Activated naive CD4-positive, alpha-beta T cell treated with anti-CD3 and anti-CD28 coated beads for 36 hours (primary cell): ENCODE measurements at regions of chr1 and their contacts with region 1.

Region 1: DNA sequence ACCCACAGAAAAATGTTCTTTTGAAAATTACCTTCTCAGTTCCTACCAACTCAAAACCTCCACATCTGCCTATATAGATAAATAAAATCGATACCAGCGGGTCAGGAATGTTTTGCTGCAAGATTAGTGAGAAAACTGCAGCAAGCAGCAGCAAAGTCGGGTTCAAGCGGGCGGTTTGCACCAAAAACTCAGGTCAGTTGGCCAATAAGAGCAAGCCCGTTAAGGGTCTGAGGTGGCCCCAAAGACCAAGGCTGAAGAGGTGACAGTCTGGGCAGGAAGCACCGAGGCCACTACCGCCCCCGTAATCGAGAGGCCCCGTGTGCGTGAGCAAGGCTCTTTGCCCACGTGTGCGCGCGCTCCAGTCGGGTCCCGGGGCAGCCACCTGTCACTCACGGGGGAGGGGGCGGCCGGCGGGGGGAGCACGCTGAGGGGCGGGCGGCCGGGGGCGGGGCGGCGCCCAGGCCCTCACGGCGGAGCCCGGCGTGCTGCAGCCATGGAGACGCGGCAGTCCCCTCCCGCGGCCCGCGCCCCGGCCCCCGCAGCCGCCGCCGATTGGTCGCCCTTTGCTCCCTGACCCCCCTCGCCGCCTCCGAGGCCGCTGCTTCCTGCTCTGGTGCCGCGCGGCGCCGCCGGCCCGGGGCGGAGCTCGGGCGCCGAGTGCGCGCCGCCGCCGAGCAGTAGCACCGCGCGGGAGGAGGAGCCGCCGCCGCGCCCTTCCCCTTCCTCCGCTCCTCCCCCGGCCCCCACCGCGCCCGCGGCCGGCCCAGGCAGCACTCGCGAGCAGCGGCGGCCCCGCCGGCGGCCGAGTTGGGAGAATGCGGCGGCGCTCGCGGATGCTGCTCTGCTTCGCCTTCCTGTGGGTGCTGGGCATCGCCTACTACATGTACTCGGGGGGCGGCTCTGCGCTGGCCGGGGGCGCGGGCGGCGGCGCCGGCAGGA is at the start of gene GALNT2:
- DNase-seq: peak; percentile 89
- H3K4me3 Mint-ChIP-seq: peak within 1 kb of the TSS; percentile 88
- H3K27ac Mint-ChIP-seq: peak within 1 kb of the TSS; percentile 83
- H3K4me1 Mint-ChIP-seq: peaks cover 44% of the 10 kb centered on the region
- H3K27me3 Mint-ChIP-seq: no peaks in the 10 kb centered on the region
- total RNA-seq, gene GALNT2: 59.8 to 62.4 TPM

Region 2: DNA sequence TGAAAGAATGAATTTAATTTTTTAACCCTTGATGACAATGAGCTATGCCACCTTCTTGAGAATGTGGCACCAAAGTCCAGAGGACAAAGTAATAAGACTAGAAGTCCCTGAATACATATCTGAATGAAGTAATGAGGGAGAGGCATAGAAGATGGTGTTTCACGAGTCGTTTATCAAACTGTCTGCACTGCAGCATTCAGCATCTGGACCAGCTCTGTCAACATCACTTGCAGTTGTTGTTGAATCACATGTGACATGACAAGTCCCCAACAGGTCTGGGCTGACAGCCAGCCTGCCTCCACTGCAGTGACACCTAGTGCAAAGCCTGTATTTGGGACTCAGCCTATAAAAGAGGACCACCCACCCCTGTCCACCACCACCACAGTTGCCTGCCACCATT is 17.0 kb before region 1 on chr1:
- CTCF ChIA-PET with region 1: no interaction called
- intact Hi-C with region 1: no loop called
- DNase-seq: no peak
- H3K4me3 Mint-ChIP-seq: no peak overlapping the region
- H3K27ac Mint-ChIP-seq: no peak overlapping the region
- H3K4me1 Mint-ChIP-seq: peaks cover 3% of the 10 kb centered on the region
- H3K27me3 Mint-ChIP-seq: no peaks in the 10 kb centered on the region

Region 3: GRCh38 chr1:230123280-230124185 is 56.8 kb after region 1 on chr1:
- CTCF ChIA-PET with region 1: interaction called, 3 read pairs
- intact Hi-C with region 1: loop called (anchors 1 kb)
- DNase-seq: peak; percentile 63
- H3K4me3 Mint-ChIP-seq: no peak overlapping the region
- H3K27ac Mint-ChIP-seq: no peak overlapping the region
- H3K4me1 Mint-ChIP-seq: peaks cover 73% of the 10 kb centered on the region
- H3K27me3 Mint-ChIP-seq: no peaks in the 10 kb centered on the region